GM12878 (cell line): ENCODE measurements at regions of chr2 and their contacts with region 1.

Region 1: GRCh38 chr2:45869165-45869501 is 217.7 kb downstream of the PRKCE start:
- DNase-seq: no peak
- ATAC-seq: no peak
- H3K4me3 ChIP-seq: no peak overlapping the region
- H3K27ac ChIP-seq: no peak overlapping the region
- H3K4me1 ChIP-seq: peaks cover 23% of the 10 kb centered on the region
- H3K27me3 ChIP-seq: no peaks in the 10 kb centered on the region
- CTCF ChIP-seq: no peak
- EP300 ChIP-seq: no peak
- POLR2A ChIP-seq: no peak
- RAD21 ChIP-seq: no peak

Region 2: DNA sequence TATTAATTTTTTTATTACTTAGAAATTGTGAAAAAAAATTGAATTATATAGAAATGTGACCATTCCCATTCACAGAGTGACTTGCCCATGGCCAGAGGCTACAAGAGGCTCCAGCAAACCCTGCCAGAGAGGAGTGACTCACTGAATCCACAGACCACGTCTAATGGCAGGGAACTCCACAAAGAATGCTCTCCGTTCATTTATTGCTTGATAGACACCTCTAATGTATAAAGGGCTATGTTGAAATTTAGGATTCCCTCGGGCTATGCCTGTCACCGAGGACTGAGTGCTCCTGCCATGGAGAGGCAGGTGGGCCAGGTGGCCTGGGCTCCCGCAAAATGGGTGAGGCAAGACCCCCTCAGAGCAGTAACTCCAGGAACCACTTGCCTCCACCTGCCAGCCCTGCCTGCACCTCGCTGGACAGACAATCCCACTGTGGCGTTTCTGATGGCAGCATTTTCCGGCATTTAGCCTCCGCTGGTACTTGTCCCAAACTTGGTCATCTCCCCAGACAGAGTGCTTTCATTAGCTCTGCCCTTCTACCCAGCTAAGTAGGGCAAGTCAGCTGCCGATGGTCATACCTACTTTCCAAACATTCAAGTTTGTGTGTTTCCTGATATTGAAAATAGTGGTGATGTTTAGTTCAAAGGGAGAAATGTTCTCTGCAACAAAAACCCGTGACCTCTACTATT is 17.4 kb before region 1 on chr2:
- CTCF ChIA-PET with region 1: interaction called, 6 read pairs
- POLR2A ChIA-PET with region 1: interaction called, 22 read pairs
- RAD21 ChIA-PET with region 1: interaction called, 23 read pairs
- SMC1A ChIA-PET with region 1: interaction called, 107 read pairs
- in situ Hi-C with region 1: no loop called
- intact Hi-C with region 1: no loop called
- DNase-seq: no peak
- ATAC-seq: no peak
- H3K4me3 ChIP-seq: no peak overlapping the region
- H3K27ac ChIP-seq: no peak overlapping the region
- H3K4me1 ChIP-seq: peaks cover 27% of the 10 kb centered on the region
- H3K27me3 ChIP-seq: no peaks in the 10 kb centered on the region
- CTCF ChIP-seq: no peak
- EP300 ChIP-seq: no peak
- POLR2A ChIP-seq: no peak
- RAD21 ChIP-seq: no peak

Region 3: DNA sequence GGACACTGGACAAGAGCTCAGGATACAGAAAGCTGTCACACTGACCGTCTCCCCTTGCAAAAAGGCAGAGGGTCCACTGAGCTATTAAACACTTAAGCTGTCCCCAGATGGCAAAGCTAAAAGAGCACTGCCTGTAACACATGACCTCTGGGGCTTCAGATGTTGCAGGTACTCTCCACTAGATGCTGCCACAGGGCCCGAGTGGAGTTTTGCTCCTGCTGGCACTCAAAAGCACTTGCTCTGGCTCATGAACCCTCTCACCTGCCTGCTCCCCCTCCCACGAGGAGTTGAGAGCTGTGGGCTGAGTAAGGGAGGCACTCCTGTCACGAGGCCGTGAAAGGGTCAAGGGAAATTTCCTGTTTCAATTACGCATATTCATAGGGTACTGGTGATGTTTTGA is 10.3 kb after region 1 on chr2:
- CTCF ChIA-PET with region 1: interaction called, 6 read pairs
- POLR2A ChIA-PET with region 1: interaction called, 19 read pairs
- RAD21 ChIA-PET with region 1: interaction called, 5 read pairs
- SMC1A ChIA-PET with region 1: interaction called, 124 read pairs
- in situ Hi-C with region 1: no loop called
- intact Hi-C with region 1: no loop called
- DNase-seq: no peak
- ATAC-seq: peak; percentile 77
- H3K4me3 ChIP-seq: no peak overlapping the region
- H3K27ac ChIP-seq: no peak overlapping the region
- H3K4me1 ChIP-seq: peaks cover 9% of the 10 kb centered on the region
- H3K27me3 ChIP-seq: no peaks in the 10 kb centered on the region
- CTCF ChIP-seq: peak; percentile 13 to 47 (median 37); a peak in 3 of 6 replicates
- EP300 ChIP-seq: no peak
- POLR2A ChIP-seq: no peak
- RAD21 ChIP-seq: no peak